ENCODE measurements at regions of chr9 and their contacts with region 1.

Region 1: DNA sequence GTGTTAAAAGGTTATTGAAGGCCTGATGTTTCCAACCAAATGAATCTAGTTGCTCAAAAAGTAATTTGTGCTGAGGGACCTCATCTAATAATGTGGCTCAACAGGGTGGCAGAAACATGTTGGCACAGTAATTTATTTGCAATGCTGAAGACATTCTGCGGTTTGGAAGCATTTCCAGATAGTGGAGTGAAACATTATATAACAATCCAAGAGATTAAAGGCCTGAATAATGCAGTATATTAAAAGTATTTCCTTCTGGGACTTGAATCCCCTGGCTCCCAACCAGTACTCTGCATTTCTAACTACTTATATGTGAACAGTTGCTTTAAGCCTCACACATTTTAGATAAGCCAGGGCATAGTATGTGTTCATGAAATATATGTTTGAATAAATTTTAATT is 25.9 kb upstream of the ALDH1A1 start:
- DNase-seq: no peak
- H3K4me3 ChIP-seq: no peak overlapping the region
- H3K4me3 Mint-ChIP-seq: no peak overlapping the region
- H3K27ac Mint-ChIP-seq: no peak overlapping the region
- H3K4me1 ChIP-seq: peaks cover 14% of the 10 kb centered on the region; the same call in 1 of the 2 replicates
- H3K4me1 Mint-ChIP-seq: no peaks in the 10 kb centered on the region
- H3K27me3 ChIP-seq: no peaks in the 10 kb centered on the region
- H3K27me3 Mint-ChIP-seq: no peaks in the 10 kb centered on the region
- CTCF ChIP-seq: no peak

Region 2: GRCh38 chr9:72933730-72934665 is 44.7 kb before region 1 on chr9:
- CTCF ChIA-PET with region 1: interaction called, 3 read pairs
- POLR2A ChIA-PET with region 1: interaction called, 4 read pairs
- intact Hi-C with region 1: loop called (anchors 2 kb)
- DNase-seq: peak in 1 of 2 experiments; percentile 13
- H3K4me3 ChIP-seq: no peak overlapping the region
- H3K4me3 Mint-ChIP-seq: no peak overlapping the region
- H3K27ac Mint-ChIP-seq: no peak overlapping the region
- H3K4me1 ChIP-seq: peaks cover 9% of the 10 kb centered on the region; the same call in 1 of the 2 replicates
- H3K4me1 Mint-ChIP-seq: peaks cover 7% of the 10 kb centered on the region
- H3K27me3 ChIP-seq: no peaks in the 10 kb centered on the region
- H3K27me3 Mint-ChIP-seq: no peaks in the 10 kb centered on the region
- CTCF ChIP-seq: no peak

Region 3: DNA sequence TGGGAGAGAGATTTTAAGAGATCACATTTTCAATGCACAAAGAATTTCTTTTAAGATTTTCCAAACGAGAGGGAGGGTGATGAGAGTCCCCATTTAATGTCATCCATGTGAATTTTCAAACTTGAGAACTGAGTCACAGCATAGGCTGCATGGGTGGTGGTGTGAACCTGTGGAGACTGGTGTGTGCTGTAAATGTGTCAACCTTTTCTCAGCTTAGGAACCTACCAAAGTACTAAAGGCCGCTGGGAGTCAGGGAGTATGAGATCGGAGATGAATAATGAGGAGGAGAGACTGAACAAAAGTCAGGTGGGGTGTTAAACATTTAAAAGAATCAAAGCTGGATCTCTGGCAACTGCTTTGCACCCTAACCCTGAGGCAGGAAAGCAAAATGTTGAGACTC is 33.4 kb before region 1 on chr9:
- CTCF ChIA-PET with region 1: no interaction called
- POLR2A ChIA-PET with region 1: no interaction called
- intact Hi-C with region 1: no loop called
- DNase-seq: no peak
- H3K4me3 ChIP-seq: no peak overlapping the region
- H3K4me3 Mint-ChIP-seq: no peak overlapping the region
- H3K27ac Mint-ChIP-seq: no peak overlapping the region
- H3K4me1 ChIP-seq: no peaks in the 10 kb centered on the region
- H3K4me1 Mint-ChIP-seq: peaks cover 8% of the 10 kb centered on the region
- H3K27me3 ChIP-seq: no peaks in the 10 kb centered on the region
- H3K27me3 Mint-ChIP-seq: no peaks in the 10 kb centered on the region
- CTCF ChIP-seq: no peak

Region 4: GRCh38 chr9:72997387-72997995 is 18.7 kb after region 1 on chr9:
- CTCF ChIA-PET with region 1: no interaction called
- POLR2A ChIA-PET with region 1: no interaction called
- intact Hi-C with region 1: loop called (anchors 1 kb)
- DNase-seq: peak; percentile 11 to 42
- H3K4me3 ChIP-seq: no peak overlapping the region
- H3K4me3 Mint-ChIP-seq: peak overlapping the region; percentile 69
- H3K27ac Mint-ChIP-seq: peak overlapping the region; percentile 74
- H3K4me1 ChIP-seq: peaks cover 6% of the 10 kb centered on the region; the same call in 1 of the 2 replicates
- H3K4me1 Mint-ChIP-seq: no peaks in the 10 kb centered on the region
- H3K27me3 ChIP-seq: no peaks in the 10 kb centered on the region
- H3K27me3 Mint-ChIP-seq: no peaks in the 10 kb centered on the region
- CTCF ChIP-seq: no peak